Caki2 (cell line): ENCODE measurements at regions of chr4 and their contacts with region 1.

Region 1: GRCh38 chr4:109433205-109434006 is at the start of gene SEC24B:
- DNase-seq: peak; percentile 88
- total RNA-seq, gene SEC24B: 5.1 and 5.7 TPM in 2 replicates

Region 2: GRCh38 chr4:109559983-109560686 is 126.7 kb after region 1 on chr4 and contains the start of gene MCUB:
- in situ Hi-C with region 1: loop called (anchors 10 kb)
- DNase-seq: peak; percentile 92
- total RNA-seq, gene MCUB: 65.8 and 85.7 TPM in 2 replicates

Region 3: GRCh38 chr4:109815151-109816081 is 382.0 kb after region 1 on chr4 and contains the start of gene GAR1:
- in situ Hi-C with region 1: loop called (anchors 25 kb)
- DNase-seq: peak; percentile 90
- total RNA-seq, gene GAR1: 0.93 and 11.9 TPM in 2 replicates